ENCODE measurements at regions of chrX and their contacts with region 1.

Region 1: DNA sequence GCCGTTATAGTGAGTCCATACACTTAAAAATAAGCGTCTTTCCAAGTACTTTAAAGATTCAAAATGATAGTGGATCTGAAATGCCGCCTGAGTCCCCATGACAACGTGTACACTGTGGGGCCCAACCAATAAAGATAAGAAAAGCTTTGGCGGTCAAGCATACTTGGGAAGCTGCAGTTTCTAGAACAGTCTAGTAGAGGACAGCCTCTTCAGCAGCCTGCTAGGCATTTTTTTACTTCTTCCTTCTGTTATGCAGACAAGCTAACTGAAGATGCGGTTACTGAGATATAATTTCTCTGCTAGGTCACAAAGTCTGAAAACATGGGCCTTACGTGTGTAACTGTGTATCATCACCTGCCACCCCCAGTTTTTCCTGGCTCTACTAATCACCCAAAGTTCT is 402 bp upstream of the UPRT start:
- DNase-seq: no peak
- ATAC-seq: peak; percentile 52
- H3K4me3 ChIP-seq: peak overlapping the region; percentile 97
- H3K4me3 Mint-ChIP-seq: peak overlapping the region; percentile 89 to 99 (median 94)
- H3K27ac ChIP-seq: peak overlapping the region; percentile 95
- H3K27ac Mint-ChIP-seq: peak overlapping the region; percentile 87 to 98 (median 96)
- H3K4me1 ChIP-seq: peaks cover 7 to 9% of the 10 kb centered on the region in 2 donors
- H3K4me1 Mint-ChIP-seq: peaks cover 15 to 68% (median 48%) of the 10 kb centered on the region in 7 donors
- H3K27me3 ChIP-seq: no peaks in the 10 kb centered on the region
- H3K27me3 Mint-ChIP-seq: no peaks in the 10 kb centered on the region

Region 2: DNA sequence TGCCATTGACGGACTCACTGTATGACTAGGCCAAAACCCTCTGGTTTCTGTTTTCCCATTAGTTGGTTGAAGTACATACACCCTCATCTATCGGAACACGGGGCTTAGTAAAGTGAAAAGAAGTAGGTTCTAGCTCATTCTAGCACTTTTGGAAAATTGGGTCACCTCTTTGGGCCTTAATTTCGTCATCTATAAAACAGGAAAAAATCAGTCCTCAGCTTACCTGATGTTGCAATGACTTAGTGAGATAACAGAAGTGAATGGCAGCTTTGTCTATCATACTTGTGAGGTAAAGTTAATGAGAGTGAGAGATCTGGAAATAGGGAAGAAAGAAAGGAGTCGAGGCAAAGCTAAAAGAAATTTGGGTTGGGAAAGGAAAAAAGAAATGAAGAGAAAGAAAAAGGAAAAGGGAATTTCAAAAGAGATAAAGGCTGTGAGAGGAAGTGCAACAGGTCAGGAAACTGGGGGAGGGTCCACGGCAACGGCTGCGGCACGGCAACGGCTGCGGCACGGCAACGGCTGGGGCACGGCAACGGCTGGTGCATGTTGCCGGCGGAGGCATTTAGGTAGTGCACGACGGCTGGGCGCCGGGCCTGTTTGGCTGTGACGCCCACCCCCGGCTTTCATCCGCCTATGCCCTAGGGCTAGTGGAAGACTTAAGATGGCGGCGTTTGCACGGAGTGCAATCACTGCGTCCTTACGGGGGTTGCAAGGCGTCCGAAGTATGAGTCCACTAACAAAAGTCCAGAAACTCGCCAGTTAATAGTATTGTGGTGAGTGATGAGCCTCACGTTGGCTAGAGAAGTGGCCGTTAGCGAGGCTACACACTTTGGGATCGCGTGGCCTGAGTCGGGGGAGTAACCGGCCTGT is 1329.6 kb before region 1 on chrX:
- CTCF ChIA-PET with region 1: no interaction called
- POLR2A ChIA-PET with region 1: no interaction called
- intact Hi-C with region 1: loop called in 1 of 2 experiments (anchors 10 kb)
- DNase-seq: peak; percentile 67 to 92 (median 87)
- ATAC-seq: peak; percentile 100
- H3K4me3 ChIP-seq: peak overlapping the region; percentile 98
- H3K4me3 Mint-ChIP-seq: peak overlapping the region; percentile 82 to 98 (median 94)
- H3K27ac ChIP-seq: peak overlapping the region; percentile 93
- H3K27ac Mint-ChIP-seq: peak overlapping the region; percentile 89 to 99 (median 96)
- H3K4me1 ChIP-seq: peaks cover 0 to 10% of the 10 kb centered on the region in 2 donors
- H3K4me1 Mint-ChIP-seq: peaks cover 12 to 49% (median 27%) of the 10 kb centered on the region in 7 donors
- H3K27me3 ChIP-seq: no peaks in the 10 kb centered on the region
- H3K27me3 Mint-ChIP-seq: peaks cover 0 to 2% (median 0%) of the 10 kb centered on the region in 5 donors

Region 3: DNA sequence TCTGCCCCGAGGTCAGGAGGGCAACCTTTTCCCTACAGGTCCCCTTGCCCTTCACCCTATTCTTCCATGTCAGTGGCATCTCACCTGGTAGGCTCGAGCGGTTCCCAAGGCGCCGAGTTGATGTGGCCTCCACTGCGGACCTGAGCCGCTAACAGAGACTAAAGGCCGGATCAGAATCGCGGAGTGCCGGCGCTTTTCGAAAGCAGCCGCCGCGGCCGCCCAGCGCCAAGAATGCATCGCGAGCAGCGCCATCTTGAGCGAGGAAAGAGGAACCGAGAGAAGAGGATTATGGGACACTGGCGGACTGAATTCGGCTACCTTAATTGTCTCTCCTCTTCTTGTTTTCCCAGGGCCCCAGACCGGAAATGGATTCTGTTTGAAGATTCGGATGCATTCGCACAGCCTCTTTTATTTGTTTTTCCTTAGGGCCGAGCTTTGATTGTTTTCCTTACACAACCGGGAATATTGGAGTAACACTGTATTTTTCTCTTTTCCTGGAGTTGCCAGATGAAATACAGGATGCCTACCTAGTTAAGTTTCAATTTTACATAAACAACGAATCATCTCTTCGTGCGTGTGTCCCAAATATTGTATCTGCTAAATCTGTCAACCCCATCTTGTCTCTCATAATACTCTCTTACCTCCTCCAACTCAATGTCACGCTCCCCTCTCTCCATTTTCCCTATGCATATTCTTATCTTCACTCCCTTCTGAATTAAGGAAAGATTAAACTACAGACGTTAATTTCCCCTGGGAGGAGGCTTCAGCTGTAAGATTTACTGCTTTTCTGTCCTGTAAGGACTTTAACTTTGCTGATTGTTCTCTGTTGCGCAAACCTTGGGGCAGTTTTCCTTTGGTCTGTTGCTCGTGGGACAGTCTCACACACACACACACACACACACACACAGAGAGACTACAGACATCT is 117.2 kb before region 1 on chrX and contains the start of gene ABCB7:
- CTCF ChIA-PET with region 1: no interaction called
- POLR2A ChIA-PET with region 1: interaction called, 6 read pairs
- intact Hi-C with region 1: loop called (anchors 1 kb)
- DNase-seq: peak; percentile 24 to 68 (median 59)
- ATAC-seq: peak; percentile 95
- H3K4me3 ChIP-seq: peak within 1 kb of the TSS; percentile 86
- H3K4me3 Mint-ChIP-seq: peak within 1 kb of the TSS; percentile 87 to 100 (median 95)
- H3K27ac ChIP-seq: peak within 1 kb of the TSS; percentile 75
- H3K27ac Mint-ChIP-seq: peak within 1 kb of the TSS; percentile 92 to 100 (median 96)
- H3K4me1 ChIP-seq: no peaks in the 10 kb centered on the region
- H3K4me1 Mint-ChIP-seq: peaks cover 10 to 63% (median 41%) of the 10 kb centered on the region in 7 donors
- H3K27me3 ChIP-seq: no peaks in the 10 kb centered on the region
- H3K27me3 Mint-ChIP-seq: no peaks in the 10 kb centered on the region
- total RNA-seq, gene ABCB7: 19.4 to 33.0 (median 26.3) TPM

Region 4: DNA sequence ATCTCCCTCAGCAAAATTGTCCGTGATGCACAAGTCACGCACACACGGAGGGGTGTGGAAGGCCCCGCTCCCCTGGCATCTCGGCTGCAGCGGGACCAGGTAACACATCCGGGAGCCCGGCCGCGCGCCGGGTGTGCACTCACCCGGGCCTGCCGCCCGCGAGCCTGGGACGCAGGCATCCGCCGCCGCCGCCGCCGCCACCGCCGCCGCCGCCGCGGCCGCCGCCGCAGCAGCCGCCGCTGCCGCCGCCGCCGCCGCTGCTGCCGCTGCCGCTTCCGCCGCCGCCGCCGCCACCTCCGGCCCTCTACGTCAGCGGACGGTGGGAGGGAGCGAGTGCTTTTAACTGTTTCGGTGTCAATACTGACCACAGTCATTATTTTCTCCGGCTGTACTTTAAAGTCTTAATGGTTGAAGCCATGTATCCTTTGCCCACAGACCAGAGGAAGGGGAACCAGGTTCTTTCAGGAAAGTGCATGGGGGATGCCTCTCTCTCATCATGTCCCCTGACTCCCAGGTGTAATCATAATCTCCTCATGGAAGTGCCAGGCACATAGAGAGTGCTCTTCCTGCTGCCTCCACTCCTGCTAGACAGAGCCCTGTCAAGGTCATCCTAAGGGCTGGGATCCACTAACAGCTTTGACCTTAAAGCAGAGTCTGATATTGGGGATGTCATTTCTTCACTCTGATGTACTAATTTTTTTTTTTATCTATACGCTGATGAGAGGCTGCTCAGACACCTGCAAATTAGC is 473.6 kb after region 1 on chrX:
- CTCF ChIA-PET with region 1: no interaction called
- POLR2A ChIA-PET with region 1: no interaction called
- intact Hi-C with region 1: loop called in 1 of 2 experiments (anchors 5 kb)
- DNase-seq: peak; percentile 5 to 30 (median 19)
- ATAC-seq: peak; percentile 56
- H3K4me3 ChIP-seq: peak overlapping the region; percentile 56
- H3K4me3 Mint-ChIP-seq: peak overlapping the region; percentile 70 to 86 (median 82)
- H3K27ac ChIP-seq: no peak overlapping the region
- H3K27ac Mint-ChIP-seq: peak overlapping the region in 7 of 9 donors; percentile 24 to 83 (median 65)
- H3K4me1 ChIP-seq: peaks cover 0 to 4% of the 10 kb centered on the region in 2 donors
- H3K4me1 Mint-ChIP-seq: peaks cover 0 to 19% (median 14%) of the 10 kb centered on the region in 7 donors
- H3K27me3 ChIP-seq: no peaks in the 10 kb centered on the region
- H3K27me3 Mint-ChIP-seq: peaks cover 0 to 13% (median 0%) of the 10 kb centered on the region in 5 donors

Region 5: DNA sequence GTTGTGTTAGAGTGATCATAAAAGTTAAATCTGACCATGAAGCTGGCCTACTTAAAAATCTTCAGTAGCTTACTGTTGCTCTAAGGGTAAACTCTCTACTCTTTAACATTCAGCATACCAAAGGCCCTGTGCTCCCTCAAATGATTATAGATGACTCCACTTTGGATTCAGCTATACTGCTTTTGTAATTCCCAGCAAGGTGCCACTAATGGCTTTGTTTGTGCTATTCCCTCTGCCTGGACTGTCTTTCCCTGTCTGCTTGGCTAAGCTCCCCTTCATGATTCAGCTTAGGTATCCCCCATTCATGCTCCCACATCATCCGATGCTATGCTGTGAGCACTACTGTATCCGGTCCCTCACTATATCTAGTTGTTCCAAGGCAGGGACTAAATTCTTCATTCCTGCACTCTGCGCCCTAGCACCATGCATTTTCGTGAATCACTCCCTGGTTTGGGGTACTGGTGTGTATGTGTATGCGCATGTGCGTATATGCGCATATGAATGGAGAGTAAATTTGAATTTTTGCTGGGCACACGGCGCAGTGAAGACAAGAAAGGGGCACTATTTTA is 898.9 kb after region 1 on chrX:
- CTCF ChIA-PET with region 1: no interaction called
- POLR2A ChIA-PET with region 1: interaction called, 6 read pairs
- intact Hi-C with region 1: loop called in 1 of 2 experiments (anchors 10 kb)
- DNase-seq: no peak
- ATAC-seq: peak; percentile 56
- H3K4me3 ChIP-seq: peak overlapping the region; percentile 74
- H3K4me3 Mint-ChIP-seq: peak overlapping the region; percentile 87 to 97 (median 92)
- H3K27ac ChIP-seq: peak overlapping the region; percentile 81
- H3K27ac Mint-ChIP-seq: peak overlapping the region; percentile 92 to 97 (median 95)
- H3K4me1 ChIP-seq: peaks cover 19 to 20% of the 10 kb centered on the region in 2 donors
- H3K4me1 Mint-ChIP-seq: peaks cover 25 to 52% (median 48%) of the 10 kb centered on the region in 7 donors
- H3K27me3 ChIP-seq: no peaks in the 10 kb centered on the region
- H3K27me3 Mint-ChIP-seq: no peaks in the 10 kb centered on the region

Measured in naive thymus-derived CD4-positive, alpha-beta T cell (primary cell).